Heart left ventricle (tissue), 16 donors: ENCODE measurements at regions of chr2 and their contacts with region 1.

Region 1: GRCh38 chr2:190328573-190329147 is 9.0 kb upstream of the HIBCH start:
- DNase-seq: no peak
- ATAC-seq: no peak
- H3K4me3 ChIP-seq: no peak overlapping the region
- H3K27ac ChIP-seq: no peak overlapping the region
- H3K4me1 ChIP-seq: no peaks in the 10 kb centered on the region
- H3K27me3 ChIP-seq: no peaks in the 10 kb centered on the region
- CTCF ChIP-seq: peak in 8 of 12 donors; percentile 14 to 41 (median 28)
- POLR2A ChIP-seq: no peak

Region 2: DNA sequence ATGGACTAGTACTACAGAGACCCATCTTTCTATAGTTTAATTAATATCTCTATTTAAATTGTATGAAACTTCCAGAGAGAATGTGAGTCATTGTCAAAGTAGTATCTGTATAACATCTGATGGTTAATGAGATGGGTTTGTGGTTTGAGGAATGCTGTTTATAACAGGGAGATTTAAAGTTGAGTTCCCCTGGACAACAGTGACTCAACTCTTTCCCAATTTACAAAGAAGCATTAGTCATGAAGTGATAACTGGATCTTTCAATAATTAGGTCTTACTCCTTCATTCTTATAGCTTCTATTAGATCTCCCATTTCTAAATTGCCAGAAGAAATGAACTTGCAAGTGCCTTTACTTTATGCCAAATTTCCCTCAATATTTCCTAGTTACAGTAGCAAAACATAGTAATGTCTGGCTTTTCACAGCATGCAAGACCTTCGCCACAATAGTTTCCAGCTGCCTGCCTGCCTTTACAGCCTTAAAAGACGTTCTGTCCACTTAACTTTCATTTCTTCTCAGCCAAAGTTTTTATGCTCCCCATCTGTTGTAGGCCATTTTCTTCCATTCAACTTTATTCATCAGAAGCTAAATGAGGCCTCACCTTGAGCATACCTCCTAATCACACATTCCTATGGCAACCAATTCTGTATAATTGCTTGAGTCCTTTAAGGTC is 935.1 kb before region 1 on chr2:
- intact Hi-C with region 1: no loop called
- DNase-seq: peak in 1 of 5 donors; percentile 33
- ATAC-seq: peak in 2 of 4 donors; percentile 30 to 81
- H3K4me3 ChIP-seq: no peak overlapping the region
- H3K27ac ChIP-seq: peak overlapping the region in 10 of 12 donors; percentile 8 to 66 (median 36)
- H3K4me1 ChIP-seq: no peaks in the 10 kb centered on the region
- H3K27me3 ChIP-seq: no peaks in the 10 kb centered on the region
- CTCF ChIP-seq: no peak
- POLR2A ChIP-seq: no peak

Region 3: GRCh38 chr2:190369635-190370034 is 41.0 kb after region 1 on chr2:
- intact Hi-C with region 1: loop called in 7 of 10 experiments (anchors 5 to 10 kb)
- DNase-seq: no peak
- ATAC-seq: no peak
- H3K4me3 ChIP-seq: no peak overlapping the region
- H3K27ac ChIP-seq: no peak overlapping the region
- H3K4me1 ChIP-seq: no peaks in the 10 kb centered on the region
- H3K27me3 ChIP-seq: no peaks in the 10 kb centered on the region
- CTCF ChIP-seq: no peak
- POLR2A ChIP-seq: no peak